AG04449 (cell line): ENCODE measurements at regions of chr17 and their contacts with region 1.

Region 1: GRCh38 chr17:50218771-50219315 is 17.4 kb upstream of the COL1A1 start:
- DNase-seq: peak; percentile 96
- H3K4me3 ChIP-seq: no peak overlapping the region; the same call in 1 of the 2 replicates
- CTCF ChIP-seq: no peak

Region 2: DNA sequence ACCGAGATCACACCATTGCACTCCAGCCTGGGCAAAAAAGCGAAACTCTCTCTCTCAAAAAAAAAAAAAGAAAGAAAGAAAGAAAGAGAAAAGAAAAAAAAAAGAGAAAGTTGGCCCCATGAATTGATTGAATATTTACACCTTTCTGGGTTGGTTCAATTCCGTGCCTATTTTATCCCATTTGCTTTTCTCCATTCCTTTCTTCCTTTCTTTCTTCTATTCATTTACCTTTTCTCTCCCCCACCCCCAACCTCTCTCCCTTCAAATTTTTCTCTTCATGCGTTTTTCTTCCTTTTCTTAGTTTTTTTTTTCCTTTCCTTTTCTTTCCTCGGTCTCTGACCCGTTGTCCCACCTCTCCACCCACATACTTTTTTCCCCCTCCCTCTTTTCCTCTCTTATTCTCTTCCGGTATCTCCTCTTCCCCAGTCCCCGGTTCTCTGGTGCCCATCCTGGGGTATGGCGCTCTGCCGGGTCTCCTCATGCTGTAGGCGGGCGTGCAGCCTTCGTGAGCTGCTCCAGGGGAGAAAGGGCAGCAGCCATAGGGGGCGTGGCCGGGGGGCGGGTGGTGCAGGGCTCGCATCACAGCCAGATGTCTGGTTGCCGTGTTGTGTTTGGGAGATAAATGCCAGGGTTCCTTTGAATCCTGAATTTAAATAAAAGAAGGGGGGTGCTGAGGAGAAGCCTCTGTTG is 12.1 kb before region 1 on chr17:
- CTCF ChIA-PET with region 1: interaction called, 41 read pairs
- POLR2A ChIA-PET with region 1: interaction called, 831 read pairs
- DNase-seq: no peak
- H3K4me3 ChIP-seq: peak overlapping the region; percentile 36
- CTCF ChIP-seq: no peak